Mammary epithelial cell (primary cell): ENCODE measurements at regions of chr19 and their contacts with region 1.

Region 1: DNA sequence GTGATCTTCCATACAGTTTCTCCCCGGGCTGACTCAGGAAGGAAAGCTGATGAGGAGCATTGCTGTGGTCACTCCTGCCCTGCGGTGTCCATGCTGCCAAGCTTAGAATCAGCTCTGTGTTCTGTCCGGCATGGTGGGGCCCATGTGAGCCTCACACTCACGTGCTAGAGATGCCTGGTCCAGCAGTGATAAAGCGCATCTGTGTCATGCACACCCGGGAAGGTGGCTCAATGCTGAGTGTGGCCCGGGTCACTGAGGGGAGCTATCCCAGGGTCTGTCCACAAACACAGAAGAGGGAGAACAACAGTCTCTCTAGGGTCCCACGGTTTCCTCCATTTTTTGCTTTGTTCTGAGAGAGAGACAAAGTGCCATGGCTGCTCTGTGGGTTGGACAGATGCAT is 3.5 kb upstream of the LILRB1 start:
- DNase-seq: no peak
- H3K4me3 ChIP-seq: no peak overlapping the region
- H3K27ac ChIP-seq: no peak overlapping the region
- H3K4me1 ChIP-seq: no peaks in the 10 kb centered on the region
- H3K27me3 ChIP-seq: no peaks in the 10 kb centered on the region
- CTCF ChIP-seq: no peak

Region 2: DNA sequence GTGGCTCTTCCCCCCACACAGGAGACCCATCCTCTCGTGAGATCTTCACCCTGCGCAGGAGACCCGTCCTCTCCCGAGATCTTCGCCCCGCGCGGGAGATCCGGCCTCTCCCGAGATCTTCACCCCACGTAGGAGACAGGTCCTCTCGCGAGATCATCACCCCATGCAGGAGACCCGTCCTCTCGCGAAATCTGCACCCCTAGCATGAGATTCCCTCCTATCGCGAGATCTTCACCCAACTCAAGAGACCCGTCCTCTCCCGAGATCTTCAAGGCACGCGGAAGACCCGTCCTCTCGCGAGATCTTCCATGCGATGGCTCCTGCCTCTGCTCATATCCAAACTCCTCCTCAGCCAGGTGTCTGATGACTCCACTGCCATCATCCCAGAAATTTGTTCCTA is 99.8 kb before region 1 on chr19:
- CTCF ChIA-PET with region 1: no interaction called
- dilution Hi-C with region 1: loop called (anchors 5 kb)
- in situ Hi-C with region 1: no loop called
- intact Hi-C with region 1: no loop called
- DNase-seq: no peak
- H3K4me3 ChIP-seq: no peak overlapping the region
- H3K27ac ChIP-seq: no peak overlapping the region
- H3K4me1 ChIP-seq: no peaks in the 10 kb centered on the region
- H3K27me3 ChIP-seq: no peaks in the 10 kb centered on the region
- CTCF ChIP-seq: no peak

Region 3: DNA sequence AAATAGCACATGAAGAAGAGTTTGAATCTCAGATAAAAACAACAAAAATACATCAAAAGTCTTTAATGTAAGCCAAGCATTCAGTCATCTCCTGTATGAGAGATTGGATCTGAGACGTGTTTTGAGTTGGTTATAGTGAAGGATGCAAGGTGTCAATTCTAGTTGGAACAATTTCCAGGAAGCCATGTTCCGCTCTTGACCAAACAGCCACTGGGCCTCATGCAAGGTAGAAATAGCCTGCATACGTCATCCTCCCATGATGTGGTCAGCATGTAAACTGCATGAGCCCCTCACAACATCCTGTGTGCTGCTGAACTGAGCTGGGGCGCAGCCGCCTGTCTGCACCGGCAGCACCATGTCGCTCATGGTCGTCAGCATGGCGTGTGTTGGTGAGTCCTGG is 97.4 kb after region 1 on chr19 and contains the start of gene KIR3DL3:
- CTCF ChIA-PET with region 1: no interaction called
- dilution Hi-C with region 1: loop called (anchors 5 kb)
- in situ Hi-C with region 1: no loop called
- intact Hi-C with region 1: no loop called
- DNase-seq: no peak
- H3K4me3 ChIP-seq: no peak within 1 kb of the TSS
- H3K27ac ChIP-seq: no peak within 1 kb of the TSS
- H3K4me1 ChIP-seq: no peaks in the 10 kb centered on the region
- H3K27me3 ChIP-seq: no peaks in the 10 kb centered on the region
- CTCF ChIP-seq: no peak
- total RNA-seq, gene KIR3DL3: not detected